ENCODE measurements at regions of chr9 and their contacts with region 1.

Region 1: GRCh38 chr9:6782981-6783380 is 25.2 kb downstream of the KDM4C start:
- DNase-seq: no peak
- ATAC-seq: peak in 1 of 4 experiments; percentile 51
- H3K4me3 ChIP-seq: no peak overlapping the region
- H3K4me3 Mint-ChIP-seq: peak overlapping the region in 2 of 3 donors; percentile 37 to 67
- H3K27ac ChIP-seq: no peak overlapping the region
- H3K27ac Mint-ChIP-seq: peak overlapping the region; percentile 29 to 53
- H3K4me1 ChIP-seq: peaks cover 23 to 44% of the 10 kb centered on the region in 2 experiments
- H3K4me1 Mint-ChIP-seq: peaks cover 80 to 88% (median 82%) of the 10 kb centered on the region in 3 donors
- H3K27me3 ChIP-seq: no peaks in the 10 kb centered on the region
- H3K27me3 Mint-ChIP-seq: no peaks in the 10 kb centered on the region

Region 2: DNA sequence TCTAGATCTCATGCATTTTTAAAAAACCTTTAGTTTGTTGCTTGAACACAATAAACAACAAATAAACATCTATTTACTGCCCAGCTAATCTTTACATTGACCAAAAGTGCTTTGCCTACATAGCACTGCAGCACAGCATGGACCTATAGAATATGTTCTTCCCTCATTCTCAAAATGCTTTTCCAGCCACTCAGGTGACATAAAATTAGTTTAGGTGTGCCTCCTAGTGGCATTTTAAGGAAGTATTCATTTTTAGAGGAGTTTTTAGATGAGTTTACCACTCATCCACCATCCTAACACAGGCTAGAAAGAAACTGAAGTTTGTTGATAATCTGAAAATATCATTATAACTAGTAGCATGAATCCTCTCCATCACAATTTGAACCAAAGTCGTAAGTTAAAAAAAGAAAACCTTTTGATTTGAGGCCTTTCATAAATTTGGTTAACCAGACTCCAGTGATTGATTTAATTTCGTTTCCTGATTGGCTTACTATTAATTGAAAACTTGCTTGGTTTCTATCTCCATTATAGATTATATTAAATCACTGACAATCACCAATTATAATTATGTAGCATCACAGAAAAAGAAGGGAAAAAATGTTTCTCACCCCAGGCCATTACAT is 1357.9 kb before region 1 on chr9:
- CTCF ChIA-PET with region 1: interaction called in 1 of 2 experiments, 10 read pairs
- POLR2A ChIA-PET with region 1: no interaction called
- DNase-seq: peak in 1 of 35 experiments; percentile 66
- ATAC-seq: peak; percentile 50 to 64 (median 56)
- H3K4me3 ChIP-seq: no peak overlapping the region
- H3K4me3 Mint-ChIP-seq: no peak overlapping the region
- H3K27ac ChIP-seq: no peak overlapping the region
- H3K27ac Mint-ChIP-seq: no peak overlapping the region
- H3K4me1 ChIP-seq: no peaks in the 10 kb centered on the region
- H3K4me1 Mint-ChIP-seq: peaks cover 0 to 6% (median 5%) of the 10 kb centered on the region in 3 donors
- H3K27me3 ChIP-seq: no peaks in the 10 kb centered on the region
- H3K27me3 Mint-ChIP-seq: no peaks in the 10 kb centered on the region

Region 3: DNA sequence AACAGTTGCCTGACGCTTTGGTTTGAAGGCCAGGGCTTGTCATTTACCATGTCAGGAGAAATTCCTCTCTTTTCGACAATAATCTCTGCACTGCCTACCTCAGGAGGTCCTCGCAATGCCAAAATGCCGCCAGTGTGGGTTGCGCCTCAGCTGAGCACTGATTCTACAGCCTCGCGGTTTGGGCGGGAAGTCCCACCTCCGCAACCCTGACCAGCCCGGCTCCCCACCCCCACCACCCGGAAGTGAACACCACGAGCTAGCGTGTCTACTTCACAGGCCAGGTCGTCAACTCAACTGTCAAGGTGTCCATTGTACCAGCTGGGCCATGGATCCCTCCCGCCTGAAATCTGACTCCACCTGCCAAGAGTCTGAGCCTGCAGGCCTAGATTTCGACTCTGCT is 454.9 kb before region 1 on chr9 and contains the start of gene TPD52L3:
- CTCF ChIA-PET with region 1: no interaction called
- POLR2A ChIA-PET with region 1: no interaction called
- DNase-seq: no peak
- ATAC-seq: no peak
- H3K4me3 ChIP-seq: no peak within 1 kb of the TSS
- H3K4me3 Mint-ChIP-seq: no peak within 1 kb of the TSS
- H3K27ac ChIP-seq: no peak within 1 kb of the TSS
- H3K27ac Mint-ChIP-seq: no peak within 1 kb of the TSS
- H3K4me1 ChIP-seq: no peaks in the 10 kb centered on the region
- H3K4me1 Mint-ChIP-seq: no peaks in the 10 kb centered on the region
- H3K27me3 ChIP-seq: peaks cover 0 to 4% of the 10 kb centered on the region in 2 experiments
- H3K27me3 Mint-ChIP-seq: peaks cover 17 to 43% of the 10 kb centered on the region in 2 donors
- total RNA-seq, gene TPD52L3: not detected

Region 4: GRCh38 chr9:6771722-6772121 is 11.3 kb before region 1 on chr9:
- CTCF ChIA-PET with region 1: interaction called in 1 of 2 experiments, 4 read pairs
- POLR2A ChIA-PET with region 1: interaction called in 1 of 2 experiments, 13 read pairs
- DNase-seq: no peak
- ATAC-seq: no peak
- H3K4me3 ChIP-seq: no peak overlapping the region
- H3K4me3 Mint-ChIP-seq: no peak overlapping the region
- H3K27ac ChIP-seq: no peak overlapping the region
- H3K27ac Mint-ChIP-seq: no peak overlapping the region
- H3K4me1 ChIP-seq: peaks cover 0 to 9% of the 10 kb centered on the region in 2 experiments
- H3K4me1 Mint-ChIP-seq: peaks cover 45 to 60% (median 46%) of the 10 kb centered on the region in 3 donors
- H3K27me3 ChIP-seq: no peaks in the 10 kb centered on the region
- H3K27me3 Mint-ChIP-seq: no peaks in the 10 kb centered on the region

Region 5: GRCh38 chr9:6811436-6811835 is 28.5 kb after region 1 on chr9:
- CTCF ChIA-PET with region 1: no interaction called
- POLR2A ChIA-PET with region 1: no interaction called
- DNase-seq: no peak
- ATAC-seq: no peak
- H3K4me3 ChIP-seq: no peak overlapping the region
- H3K4me3 Mint-ChIP-seq: no peak overlapping the region
- H3K27ac ChIP-seq: no peak overlapping the region
- H3K27ac Mint-ChIP-seq: no peak overlapping the region
- H3K4me1 ChIP-seq: peaks cover 0 to under 1% of the 10 kb centered on the region in 2 experiments
- H3K4me1 Mint-ChIP-seq: peaks cover 5 to 13% (median 6%) of the 10 kb centered on the region in 3 donors
- H3K27me3 ChIP-seq: no peaks in the 10 kb centered on the region
- H3K27me3 Mint-ChIP-seq: no peaks in the 10 kb centered on the region

Measured in T-cell (primary cell).